Left ventricle myocardium superior (tissue), 1 donor: ENCODE measurements at regions of chr7 and their contacts with region 1.

Region 1: DNA sequence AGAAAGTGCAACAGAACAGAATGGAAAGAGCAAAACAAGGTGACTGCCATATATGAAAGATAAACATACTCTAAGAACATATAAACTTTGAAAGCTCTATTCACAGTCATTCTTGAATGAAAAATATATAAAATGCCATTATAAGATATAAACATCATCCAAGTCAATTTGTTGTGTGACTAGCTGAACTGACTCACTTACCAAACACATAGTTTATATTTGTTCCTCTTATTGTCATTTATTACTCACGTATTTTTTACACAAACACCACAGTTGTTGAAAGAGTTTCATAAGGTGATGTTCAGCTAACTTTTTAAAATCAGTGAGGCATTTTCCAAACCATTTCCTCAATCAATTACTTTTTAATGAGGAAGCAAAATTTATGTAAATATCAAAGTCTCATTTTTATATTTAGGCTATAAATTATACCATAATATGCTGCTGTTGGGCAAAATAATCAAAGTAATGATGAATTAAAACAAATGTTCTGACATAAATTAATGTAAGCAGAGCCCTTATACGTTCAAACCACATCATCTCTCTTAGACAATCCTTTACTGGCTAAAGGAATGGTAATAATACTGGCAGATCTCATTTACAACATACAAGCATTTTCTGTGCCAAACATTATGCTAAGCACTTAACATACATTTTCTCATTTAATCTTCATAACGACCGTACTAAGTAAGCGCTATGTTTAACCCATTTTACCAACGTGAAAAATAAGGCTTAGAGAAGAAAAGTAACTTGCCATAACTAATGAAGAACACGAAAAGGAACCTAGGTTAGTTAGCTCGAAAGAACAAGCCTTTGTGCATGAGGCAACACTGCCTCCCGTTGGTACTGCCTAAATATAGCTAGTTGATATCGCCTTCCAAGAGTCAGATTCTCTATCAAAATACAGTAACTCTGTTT is 7.3 kb downstream of the LRRN3 start:
- DNase-seq: no peak
- ATAC-seq: peak; percentile 72

Region 2: DNA sequence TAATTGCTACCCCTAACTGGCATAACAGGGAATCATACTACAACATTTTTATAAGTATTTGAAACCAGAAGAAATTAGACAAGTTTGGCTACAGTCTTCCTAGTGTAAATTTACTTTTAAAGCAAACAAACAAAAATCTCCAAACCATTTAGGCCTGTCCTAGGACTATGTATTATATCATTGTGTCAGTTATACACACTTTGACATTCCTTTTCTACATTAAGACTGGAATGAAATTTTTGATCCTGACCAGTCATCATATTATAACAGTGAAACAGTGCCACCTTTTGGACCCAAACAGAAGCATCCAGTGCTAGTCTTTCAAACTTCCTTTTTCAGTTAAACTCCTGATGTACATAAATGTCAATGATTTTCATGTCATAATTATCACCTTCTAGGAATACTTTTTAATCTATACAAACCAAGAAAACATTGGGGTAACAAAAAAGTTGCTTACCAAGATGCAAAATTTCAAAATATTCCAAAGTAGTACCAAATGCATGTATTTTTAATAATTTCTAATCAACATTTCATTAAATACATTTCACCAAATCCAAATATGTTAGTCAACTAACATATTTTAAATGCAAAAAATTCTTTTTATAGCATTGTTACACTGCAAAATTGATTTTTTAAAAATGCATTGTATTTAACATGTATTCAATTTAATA is 388.3 kb after region 1 on chr7:
- intact Hi-C with region 1: loop called (anchors 5 kb)
- DNase-seq: no peak
- ATAC-seq: peak; percentile 41

Region 3: GRCh38 chr7:111735661-111736551 is 637.6 kb after region 1 on chr7:
- intact Hi-C with region 1: loop called (anchors 10 kb)
- DNase-seq: no peak
- ATAC-seq: peak; percentile 78